ENCODE measurements at regions of chr5 and their contacts with region 1.

Region 1: GRCh38 chr5:149195337-149195887 is 54.1 kb downstream of the ABLIM3 start:
- DNase-seq: peak in 1 of 2 donors; percentile 64
- ATAC-seq: peak in 2 of 4 donors; percentile 67 to 74
- H3K4me3 ChIP-seq: no peak overlapping the region
- H3K27ac ChIP-seq: peak overlapping the region; percentile 31
- H3K4me1 ChIP-seq: no peaks in the 10 kb centered on the region
- H3K27me3 ChIP-seq: no peaks in the 10 kb centered on the region
- CTCF ChIP-seq: no peak

Region 2: DNA sequence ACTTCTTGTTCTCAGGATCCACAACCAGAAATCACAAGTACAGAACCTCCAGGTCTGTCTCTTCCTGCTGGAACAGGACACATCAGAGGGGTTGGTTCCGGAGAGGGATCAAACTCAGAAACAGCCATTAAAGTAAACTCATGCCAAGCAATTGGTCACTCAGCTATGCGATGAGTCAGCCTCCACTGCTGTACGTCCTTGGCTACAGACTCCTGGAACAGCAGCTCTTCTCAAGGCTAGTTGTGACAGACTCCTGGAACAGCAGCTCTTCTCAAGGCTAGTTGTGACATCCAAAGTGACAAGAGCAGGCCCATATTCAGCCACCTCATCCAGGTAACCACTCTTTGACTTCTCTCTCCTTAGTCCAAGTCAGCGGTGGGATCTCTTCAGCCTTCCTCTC is 926.9 kb before region 1 on chr5 and contains the start of gene SPINK13:
- intact Hi-C with region 1: no loop called
- DNase-seq: no peak
- ATAC-seq: peak in 1 of 4 donors; percentile 53
- H3K4me3 ChIP-seq: no peak within 1 kb of the TSS
- H3K27ac ChIP-seq: no peak within 1 kb of the TSS
- H3K4me1 ChIP-seq: no peaks in the 10 kb centered on the region
- H3K27me3 ChIP-seq: no peaks in the 10 kb centered on the region
- CTCF ChIP-seq: no peak
- total RNA-seq, gene SPINK13: not detected

Region 3: DNA sequence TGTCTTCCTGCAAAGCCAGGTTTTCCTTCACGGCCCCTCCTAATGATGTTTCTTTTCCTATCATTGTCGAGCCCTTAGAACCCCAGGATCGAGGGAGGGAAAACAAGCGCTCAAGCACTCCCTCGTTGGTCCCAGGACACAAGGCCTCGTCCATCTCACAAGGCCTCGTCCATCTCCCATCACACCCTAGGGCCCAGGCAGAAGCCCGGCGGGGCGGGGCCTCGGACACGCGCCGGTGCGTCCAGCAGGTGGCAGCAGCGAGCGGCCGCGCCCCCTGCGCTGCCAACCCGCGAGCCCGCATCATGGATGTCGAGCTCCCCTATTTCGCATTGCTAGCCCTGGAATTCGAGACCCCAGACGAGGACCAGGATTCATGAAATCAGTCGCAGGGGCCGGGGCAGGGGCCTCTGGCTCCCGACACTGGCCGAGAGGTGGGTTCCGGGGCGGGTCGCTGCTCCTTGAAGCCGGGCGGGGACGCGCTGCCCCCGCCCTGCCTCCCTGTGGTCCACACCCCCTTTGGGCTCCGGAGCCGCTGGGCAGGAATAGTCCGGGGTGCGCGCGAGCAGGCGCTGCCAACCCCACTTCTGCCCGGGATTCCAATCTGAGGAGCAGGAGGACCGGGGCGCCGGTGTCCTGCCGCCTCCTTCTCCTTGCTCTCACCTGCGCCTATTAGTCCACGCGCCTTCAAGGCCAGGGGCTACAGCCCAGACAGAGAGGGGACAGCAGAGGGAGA is 54.0 kb before region 1 on chr5 and contains the start of gene ABLIM3:
- intact Hi-C with region 1: loop called in 1 of 2 experiments (anchors 1 kb)
- DNase-seq: peak; percentile 74 to 85
- ATAC-seq: peak; percentile 91 to 95 (median 94)
- H3K4me3 ChIP-seq: peak within 1 kb of the TSS; percentile 75
- H3K27ac ChIP-seq: peak within 1 kb of the TSS; percentile 79
- H3K4me1 ChIP-seq: peaks cover 29% of the 10 kb centered on the region
- H3K27me3 ChIP-seq: no peaks in the 10 kb centered on the region
- CTCF ChIP-seq: peak; percentile 97
- total RNA-seq, gene ABLIM3: 34.3 to 54.5 (median 42.8) TPM